ENCODE measurements at regions of chr11 and their contacts with region 1.

Region 1: GRCh38 chr11:85595285-85595884 is 31.8 kb downstream of the DLG2 start:
- DNase-seq: peak in 2 of 9 experiments; percentile 62 to 72
- ATAC-seq: peak; percentile 58
- H3K4me3 ChIP-seq: no peak overlapping the region
- H3K4me3 Mint-ChIP-seq: no peak overlapping the region
- H3K27ac ChIP-seq: no peak overlapping the region
- H3K27ac Mint-ChIP-seq: no peak overlapping the region
- H3K4me1 ChIP-seq: no peaks in the 10 kb centered on the region
- H3K4me1 Mint-ChIP-seq: no peaks in the 10 kb centered on the region
- H3K27me3 ChIP-seq: no peaks in the 10 kb centered on the region
- H3K27me3 Mint-ChIP-seq: peaks cover 2% of the 10 kb centered on the region
- CTCF ChIP-seq: peak; percentile 91

Region 2: GRCh38 chr11:85627998-85628770 is 32.8 kb after region 1 on chr11 and contains the start of gene TMEM126B:
- CTCF ChIA-PET with region 1: interaction called, 3 read pairs
- POLR2A ChIA-PET with region 1: no interaction called
- intact Hi-C with region 1: loop called in 1 of 2 experiments (anchors 2 kb)
- DNase-seq: peak; percentile 89 to 97 (median 96)
- ATAC-seq: peak; percentile 97
- H3K4me3 ChIP-seq: peak within 1 kb of the TSS; percentile 80 to 91
- H3K4me3 Mint-ChIP-seq: peak within 1 kb of the TSS; percentile 91
- H3K27ac ChIP-seq: peak within 1 kb of the TSS; percentile 76 to 83
- H3K27ac Mint-ChIP-seq: peak within 1 kb of the TSS; percentile 96
- H3K4me1 ChIP-seq: peaks cover 14% of the 10 kb centered on the region
- H3K4me1 Mint-ChIP-seq: peaks cover 51% of the 10 kb centered on the region
- H3K27me3 ChIP-seq: peaks cover 0 to 1% of the 10 kb centered on the region in 2 experiments
- H3K27me3 Mint-ChIP-seq: no peaks in the 10 kb centered on the region
- CTCF ChIP-seq: no peak
- total RNA-seq, gene TMEM126B: 16.2 to 19.9 TPM

Region 3: GRCh38 chr11:85867751-85868150 is 272.4 kb after region 1 on chr11:
- CTCF ChIA-PET with region 1: interaction called, 3 read pairs
- POLR2A ChIA-PET with region 1: no interaction called
- intact Hi-C with region 1: loop called in 1 of 2 experiments (anchors 2 kb)
- DNase-seq: no peak
- ATAC-seq: no peak
- H3K4me3 ChIP-seq: no peak overlapping the region
- H3K4me3 Mint-ChIP-seq: no peak overlapping the region
- H3K27ac ChIP-seq: no peak overlapping the region
- H3K27ac Mint-ChIP-seq: no peak overlapping the region
- H3K4me1 ChIP-seq: no peaks in the 10 kb centered on the region
- H3K4me1 Mint-ChIP-seq: no peaks in the 10 kb centered on the region
- H3K27me3 ChIP-seq: no peaks in the 10 kb centered on the region
- H3K27me3 Mint-ChIP-seq: no peaks in the 10 kb centered on the region
- CTCF ChIP-seq: no peak

Region 4: DNA sequence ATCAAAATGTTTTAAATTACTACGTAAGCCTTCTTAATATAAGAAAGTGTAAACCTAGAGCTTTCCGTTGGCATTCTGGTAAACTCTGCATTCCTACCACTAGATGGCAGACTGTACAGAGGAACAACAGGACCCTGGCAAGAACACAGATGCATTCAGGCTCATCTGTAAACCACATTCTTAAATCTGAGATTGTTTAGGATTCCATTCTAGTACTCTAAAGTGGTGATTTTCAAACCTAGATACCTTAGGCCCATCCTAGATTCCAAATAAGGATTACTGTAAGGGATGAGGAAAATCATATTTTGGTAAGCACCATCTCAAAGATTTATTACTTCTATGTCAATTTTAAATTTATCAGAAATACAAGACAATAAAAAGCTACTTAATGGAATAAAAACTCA is 446.6 kb after region 1 on chr11:
- CTCF ChIA-PET with region 1: no interaction called
- POLR2A ChIA-PET with region 1: no interaction called
- intact Hi-C with region 1: loop called in 1 of 2 experiments (anchors 1 kb)
- DNase-seq: peak in 6 of 9 experiments; percentile 30 to 89 (median 43)
- ATAC-seq: peak; percentile 94
- H3K4me3 ChIP-seq: no peak overlapping the region
- H3K4me3 Mint-ChIP-seq: no peak overlapping the region
- H3K27ac ChIP-seq: peak overlapping the region in 1 of 2 experiments; percentile 47
- H3K27ac Mint-ChIP-seq: peak overlapping the region; percentile 66
- H3K4me1 ChIP-seq: peaks cover 46% of the 10 kb centered on the region
- H3K4me1 Mint-ChIP-seq: peaks cover 65% of the 10 kb centered on the region
- H3K27me3 ChIP-seq: no peaks in the 10 kb centered on the region
- H3K27me3 Mint-ChIP-seq: no peaks in the 10 kb centered on the region
- CTCF ChIP-seq: peak; percentile 67

Region 5: DNA sequence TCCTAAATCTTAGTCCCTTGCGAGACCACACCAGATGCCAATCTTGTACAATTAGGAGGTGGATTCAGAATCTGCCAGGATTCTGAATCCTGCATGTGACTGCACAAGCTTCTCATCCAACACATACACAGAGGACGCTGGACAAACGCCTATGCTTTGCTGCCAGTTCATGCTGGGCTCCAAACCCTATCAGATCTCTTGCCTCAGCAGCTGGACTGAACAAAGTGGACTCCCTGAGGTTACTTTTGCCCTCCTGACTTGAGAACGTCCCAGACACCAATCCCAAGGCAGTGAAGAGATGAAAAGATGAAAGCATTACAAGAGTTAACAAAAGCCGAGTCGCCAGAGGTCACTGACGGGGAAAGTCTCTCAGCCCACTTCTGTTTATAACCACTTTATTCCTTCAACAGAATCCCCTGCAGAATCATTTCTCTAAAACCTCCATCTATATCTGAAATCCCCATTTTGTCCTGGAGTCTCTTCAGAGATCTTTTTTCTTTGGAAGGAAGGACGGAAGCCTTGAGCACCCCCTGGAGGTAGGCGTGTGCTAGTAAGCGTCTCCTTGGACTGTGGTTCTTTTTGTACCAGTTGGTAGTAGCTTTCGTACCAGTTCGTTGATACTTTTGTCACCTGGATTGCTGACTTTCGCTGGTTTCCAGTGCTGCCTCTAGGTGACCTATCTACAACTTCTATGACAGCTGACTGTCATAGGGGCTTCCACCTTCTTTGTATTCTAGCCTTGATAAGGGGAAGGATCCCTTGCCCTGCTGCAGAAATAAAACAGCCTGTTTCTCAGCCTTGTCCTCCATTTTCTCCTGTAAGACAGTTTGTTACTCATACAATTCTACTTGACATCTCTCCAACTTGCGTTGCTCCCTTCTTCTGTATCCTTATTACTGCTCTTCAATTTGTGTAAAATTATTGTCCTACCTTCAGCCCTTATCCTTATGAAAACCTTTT is 623.0 kb after region 1 on chr11:
- CTCF ChIA-PET with region 1: interaction called, 3 read pairs
- POLR2A ChIA-PET with region 1: no interaction called
- intact Hi-C with region 1: loop called in 1 of 2 experiments (anchors 1 kb)
- DNase-seq: peak; percentile 17 to 81 (median 59)
- ATAC-seq: peak; percentile 93
- H3K4me3 ChIP-seq: peak overlapping the region in 1 of 2 experiments; percentile 38
- H3K4me3 Mint-ChIP-seq: peak overlapping the region; percentile 61
- H3K27ac ChIP-seq: no peak overlapping the region
- H3K27ac Mint-ChIP-seq: no peak overlapping the region
- H3K4me1 ChIP-seq: no peaks in the 10 kb centered on the region
- H3K4me1 Mint-ChIP-seq: peaks cover 2% of the 10 kb centered on the region
- H3K27me3 ChIP-seq: no peaks in the 10 kb centered on the region
- H3K27me3 Mint-ChIP-seq: peaks cover 7% of the 10 kb centered on the region
- CTCF ChIP-seq: peak; percentile 74

Region 6: DNA sequence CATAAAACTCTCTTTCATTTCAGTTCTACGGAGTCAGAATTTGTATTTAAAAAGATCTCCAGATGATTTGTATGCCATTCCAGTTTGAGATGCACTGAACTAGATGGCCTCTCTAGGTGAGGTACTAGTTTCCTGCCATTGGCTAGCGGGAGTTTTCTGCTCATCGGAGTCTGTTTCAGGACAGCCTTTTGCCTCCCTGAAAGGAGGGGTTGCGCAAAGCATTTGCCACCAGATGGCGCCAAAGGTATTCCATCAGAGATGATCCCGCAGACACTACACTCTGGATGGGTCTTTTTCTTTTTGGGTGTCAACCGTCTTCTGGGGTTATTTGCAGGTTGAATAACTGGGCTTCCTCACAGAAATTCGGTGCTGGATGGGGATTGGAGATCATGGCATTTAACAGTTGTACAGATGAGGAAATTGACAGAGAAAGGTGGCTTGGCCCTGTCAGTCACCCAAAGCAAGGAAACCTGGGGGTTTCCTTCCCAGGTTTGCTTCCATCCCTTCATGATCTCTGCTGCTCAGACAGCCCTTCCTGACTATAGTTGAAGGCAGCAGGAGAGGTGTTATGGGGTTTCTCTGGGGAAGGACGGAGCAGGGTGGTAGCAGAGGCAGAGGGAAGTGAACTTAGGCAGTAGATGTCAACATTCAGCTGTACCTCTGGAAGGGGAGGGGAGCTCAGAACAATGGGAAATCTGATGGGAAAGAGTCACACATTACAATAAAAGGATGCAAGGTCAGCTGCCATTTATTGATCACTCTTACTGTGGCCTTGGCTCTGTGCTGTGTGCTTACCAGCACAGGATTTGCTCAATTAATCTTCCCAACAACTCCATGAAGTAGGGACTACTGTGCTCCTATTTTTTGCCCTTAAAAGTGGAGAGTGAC is 860.9 kb after region 1 on chr11:
- CTCF ChIA-PET with region 1: no interaction called
- POLR2A ChIA-PET with region 1: no interaction called
- intact Hi-C with region 1: loop called in 1 of 2 experiments (anchors 2 kb)
- DNase-seq: peak; percentile 45 to 82 (median 71)
- ATAC-seq: no peak
- H3K4me3 ChIP-seq: no peak overlapping the region
- H3K4me3 Mint-ChIP-seq: no peak overlapping the region
- H3K27ac ChIP-seq: no peak overlapping the region
- H3K27ac Mint-ChIP-seq: no peak overlapping the region
- H3K4me1 ChIP-seq: no peaks in the 10 kb centered on the region
- H3K4me1 Mint-ChIP-seq: no peaks in the 10 kb centered on the region
- H3K27me3 ChIP-seq: no peaks in the 10 kb centered on the region
- H3K27me3 Mint-ChIP-seq: no peaks in the 10 kb centered on the region
- CTCF ChIP-seq: peak; percentile 75

Measured in CD8-positive, alpha-beta T cell (primary cell).